ENCODE measurements at regions of chr10 and their contacts with region 1.

Region 1: DNA sequence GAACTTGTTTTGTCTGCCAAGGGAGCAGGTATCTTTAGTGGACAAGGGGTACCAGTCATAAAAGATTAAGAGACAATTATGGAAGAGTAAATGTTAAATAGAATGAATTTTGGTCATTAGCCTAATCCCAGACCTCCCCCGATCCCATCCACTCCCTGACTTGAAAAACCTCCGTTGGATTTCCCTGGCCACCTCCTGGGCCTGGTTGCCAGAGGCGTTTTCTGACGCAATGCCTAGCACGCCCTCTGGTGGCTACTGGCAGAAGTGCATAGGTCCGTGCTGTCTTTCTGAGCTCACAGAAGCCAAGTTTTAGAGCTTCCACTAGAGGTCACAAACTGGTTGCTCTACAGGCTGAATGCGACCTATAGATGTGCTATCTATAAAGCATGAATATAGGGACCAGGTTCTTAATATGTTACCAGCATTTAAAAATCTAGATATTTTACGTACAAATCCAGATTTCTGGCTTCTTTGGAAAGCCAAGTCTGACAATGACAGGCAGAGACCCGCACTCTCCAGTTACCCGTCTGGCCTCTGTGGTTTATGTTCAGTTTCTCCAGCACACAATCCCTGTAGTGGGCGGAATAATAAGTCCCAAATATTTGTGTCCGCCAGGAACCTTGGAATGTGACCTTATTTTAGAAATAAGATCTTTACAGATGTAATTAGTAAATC is 39.8 kb downstream of the SPOCK2 start:
- DNase-seq: peak; percentile 95
- H3K27ac ChIP-seq: peak overlapping the region; percentile 40
- CTCF ChIP-seq: peak; percentile 99

Region 2: DNA sequence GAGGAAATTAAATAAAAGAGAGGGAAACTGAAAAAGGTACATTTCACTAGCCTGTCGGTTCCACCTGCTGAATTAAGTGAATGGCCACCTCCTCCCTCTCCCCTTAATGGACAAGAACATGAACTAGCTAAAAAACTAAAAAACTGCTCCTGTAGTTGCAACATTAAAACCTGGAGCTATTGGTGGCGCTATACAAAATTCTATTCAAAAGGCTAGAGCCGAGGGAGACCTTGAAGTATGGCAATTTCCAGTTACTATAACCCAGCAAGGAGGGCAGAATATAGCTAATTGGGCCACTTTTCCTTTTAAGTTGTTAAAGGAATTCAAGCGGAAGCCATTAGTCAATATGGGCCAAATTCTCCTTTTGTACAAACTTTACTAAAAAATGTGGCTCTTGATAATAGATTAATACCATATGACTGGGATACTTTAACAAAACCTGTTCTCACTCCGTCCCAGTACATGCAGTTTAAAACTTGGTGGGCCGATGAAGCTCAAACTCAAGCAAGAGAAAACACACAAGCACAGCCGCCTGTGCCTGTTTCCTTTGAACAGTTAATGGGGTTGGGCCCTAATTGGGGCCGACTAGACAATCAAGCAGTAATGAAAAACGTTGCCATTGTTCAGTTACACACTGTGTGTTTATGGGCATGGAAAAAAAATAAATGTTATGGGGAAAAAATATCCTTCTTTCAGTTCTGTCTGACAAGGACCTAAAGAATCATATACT is 90.9 kb before region 1 on chr10:
- CTCF ChIA-PET with region 1: interaction called, 12 read pairs
- POLR2A ChIA-PET with region 1: no interaction called
- DNase-seq: no peak
- H3K27ac ChIP-seq: no peak overlapping the region
- CTCF ChIP-seq: no peak

Region 3: GRCh38 chr10:72031706-72032105 is 16.9 kb before region 1 on chr10:
- CTCF ChIA-PET with region 1: no interaction called
- POLR2A ChIA-PET with region 1: no interaction called
- DNase-seq: no peak
- H3K27ac ChIP-seq: no peak overlapping the region
- CTCF ChIP-seq: no peak

Region 4: GRCh38 chr10:72099054-72099921 is 50.7 kb after region 1 on chr10:
- CTCF ChIA-PET with region 1: no interaction called
- POLR2A ChIA-PET with region 1: no interaction called
- DNase-seq: no peak
- H3K27ac ChIP-seq: peak overlapping the region; percentile 59
- CTCF ChIP-seq: no peak

Region 5: DNA sequence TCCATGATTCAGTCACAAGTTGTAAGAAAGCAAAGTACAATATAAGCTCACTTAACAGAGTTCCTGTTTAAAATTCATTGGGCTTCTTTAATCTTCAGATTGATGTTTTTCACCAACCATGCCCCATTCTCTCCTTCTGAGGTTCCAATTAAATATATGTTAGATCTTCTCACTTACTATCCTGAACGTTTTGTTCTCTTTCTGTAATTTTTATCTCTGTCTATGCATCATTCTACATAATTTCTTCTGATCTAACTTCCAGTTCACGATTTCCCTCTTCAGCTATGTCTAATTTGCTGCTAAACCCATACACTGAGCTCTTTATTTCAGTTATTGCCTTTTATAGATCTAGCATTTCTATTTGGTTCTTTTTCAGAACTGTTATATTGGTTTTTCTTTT is 67.8 kb after region 1 on chr10:
- CTCF ChIA-PET with region 1: no interaction called
- POLR2A ChIA-PET with region 1: no interaction called
- DNase-seq: no peak
- H3K27ac ChIP-seq: no peak overlapping the region
- CTCF ChIP-seq: no peak

Region 6: GRCh38 chr10:72204296-72204695 is 155.7 kb after region 1 on chr10:
- CTCF ChIA-PET with region 1: no interaction called
- POLR2A ChIA-PET with region 1: no interaction called
- DNase-seq: no peak
- H3K27ac ChIP-seq: no peak overlapping the region
- CTCF ChIP-seq: no peak